ENCODE measurements at regions of chr11 and their contacts with region 1.

Region 1: GRCh38 chr11:47152953-47153950 is 23.4 kb downstream of the ARFGAP2 start:
- DNase-seq: peak; percentile 93
- H3K4me3 ChIP-seq: no peak overlapping the region
- H3K27ac ChIP-seq: no peak overlapping the region
- H3K4me1 ChIP-seq: no peaks in the 10 kb centered on the region
- H3K27me3 ChIP-seq: no peaks in the 10 kb centered on the region
- CTCF ChIP-seq: peak; percentile 100

Region 2: GRCh38 chr11:46700241-46701077 is 452.8 kb before region 1 on chr11 and contains the starts of genes ARHGAP1 and ZNF408:
- CTCF ChIA-PET with region 1: interaction called, 4 read pairs
- POLR2A ChIA-PET with region 1: no interaction called
- intact Hi-C with region 1: loop called (anchors 10 kb)
- DNase-seq: peak; percentile 100
- H3K4me3 ChIP-seq: peak within 1 kb of the TSS; percentile 65
- H3K27ac ChIP-seq: peak within 1 kb of the TSS; percentile 98
- H3K4me1 ChIP-seq: peaks cover 6% of the 10 kb centered on the region
- H3K27me3 ChIP-seq: no peaks in the 10 kb centered on the region
- CTCF ChIP-seq: no peak
- total RNA-seq, gene ARHGAP1: 89.3 and 92.8 TPM in 2 replicates
- total RNA-seq, gene ZNF408: 33.9 and 40.1 TPM in 2 replicates

Region 3: GRCh38 chr11:46889689-46890475 is 263.4 kb before region 1 on chr11:
- CTCF ChIA-PET with region 1: interaction called, 17 read pairs
- POLR2A ChIA-PET with region 1: no interaction called
- intact Hi-C with region 1: loop called (anchors 1 kb)
- DNase-seq: peak; percentile 92
- H3K4me3 ChIP-seq: no peak overlapping the region
- H3K27ac ChIP-seq: no peak overlapping the region
- H3K4me1 ChIP-seq: no peaks in the 10 kb centered on the region
- H3K27me3 ChIP-seq: no peaks in the 10 kb centered on the region
- CTCF ChIP-seq: peak; percentile 100

Region 4: DNA sequence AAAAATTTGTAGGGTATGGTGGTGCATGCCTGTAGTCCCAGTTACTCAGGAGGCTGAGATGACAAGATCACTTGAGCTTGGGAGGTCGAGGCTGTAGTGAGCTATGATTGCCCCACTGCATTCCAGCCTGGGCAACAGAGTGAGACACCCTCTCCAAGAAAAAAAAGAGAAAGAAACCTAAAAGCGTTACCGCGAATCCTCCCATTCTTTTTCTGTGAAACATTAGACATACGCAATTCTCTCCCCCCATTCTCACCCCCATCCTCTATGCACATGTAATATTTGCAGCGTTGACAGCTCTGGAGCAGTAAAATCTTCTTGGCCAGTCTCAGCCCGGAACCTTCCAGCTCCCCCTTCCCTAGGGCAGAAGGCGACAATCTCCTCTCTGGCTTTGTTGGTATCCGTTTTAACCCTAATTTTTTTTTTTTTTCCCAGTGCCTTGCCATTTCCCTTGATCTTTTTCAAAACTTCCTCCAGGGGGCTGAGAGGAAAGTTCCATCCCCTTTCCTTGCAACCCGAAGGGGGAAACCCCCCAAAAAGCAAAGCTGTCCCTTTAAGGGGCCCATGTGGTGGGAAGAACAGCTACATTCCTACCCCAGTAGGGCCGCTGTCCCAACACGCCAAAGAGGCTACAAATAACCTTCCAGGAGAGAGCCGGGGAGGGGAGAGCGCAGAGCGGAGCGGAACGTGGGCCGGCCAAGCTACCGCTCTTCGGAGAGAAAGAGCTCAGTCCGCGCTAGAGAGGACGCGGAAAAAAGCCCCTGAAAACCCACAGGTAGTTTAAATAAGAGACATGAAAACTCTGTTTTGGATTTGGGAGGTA is 236.8 kb before region 1 on chr11:
- CTCF ChIA-PET with region 1: interaction called, 42 read pairs
- POLR2A ChIA-PET with region 1: no interaction called
- intact Hi-C with region 1: loop called (anchors 1 kb)
- DNase-seq: peak; percentile 96
- H3K4me3 ChIP-seq: peak overlapping the region; percentile 71
- H3K27ac ChIP-seq: peak overlapping the region; percentile 60
- H3K4me1 ChIP-seq: peaks cover 47% of the 10 kb centered on the region
- H3K27me3 ChIP-seq: no peaks in the 10 kb centered on the region
- CTCF ChIP-seq: peak; percentile 69

Region 5: GRCh38 chr11:46936138-46937110 is 216.8 kb before region 1 on chr11 and contains the start of gene CSTPP1:
- CTCF ChIA-PET with region 1: interaction called, 11 read pairs
- POLR2A ChIA-PET with region 1: no interaction called
- intact Hi-C with region 1: no loop called
- DNase-seq: peak; percentile 100
- H3K4me3 ChIP-seq: peak within 1 kb of the TSS; percentile 64
- H3K27ac ChIP-seq: peak within 1 kb of the TSS; percentile 1
- H3K4me1 ChIP-seq: no peaks in the 10 kb centered on the region
- H3K27me3 ChIP-seq: no peaks in the 10 kb centered on the region
- CTCF ChIP-seq: no peak
- total RNA-seq, gene CSTPP1: 79.3 and 89.7 TPM in 2 replicates

Region 6: GRCh38 chr11:47201015-47201414 is 47.8 kb after region 1 on chr11:
- CTCF ChIA-PET with region 1: no interaction called
- POLR2A ChIA-PET with region 1: no interaction called
- intact Hi-C with region 1: no loop called
- DNase-seq: peak; percentile 56
- H3K4me3 ChIP-seq: no peak overlapping the region
- H3K27ac ChIP-seq: no peak overlapping the region
- H3K4me1 ChIP-seq: no peaks in the 10 kb centered on the region
- H3K27me3 ChIP-seq: no peaks in the 10 kb centered on the region
- CTCF ChIP-seq: no peak

Region 7: GRCh38 chr11:47335733-47336132 is 182.5 kb after region 1 on chr11:
- CTCF ChIA-PET with region 1: interaction called, 12 read pairs
- POLR2A ChIA-PET with region 1: no interaction called
- intact Hi-C with region 1: no loop called
- DNase-seq: no peak
- H3K4me3 ChIP-seq: no peak overlapping the region
- H3K27ac ChIP-seq: no peak overlapping the region
- H3K4me1 ChIP-seq: no peaks in the 10 kb centered on the region
- H3K27me3 ChIP-seq: no peaks in the 10 kb centered on the region
- CTCF ChIP-seq: no peak